ENCODE measurements at regions of chr4 and their contacts with region 1.

Region 1: DNA sequence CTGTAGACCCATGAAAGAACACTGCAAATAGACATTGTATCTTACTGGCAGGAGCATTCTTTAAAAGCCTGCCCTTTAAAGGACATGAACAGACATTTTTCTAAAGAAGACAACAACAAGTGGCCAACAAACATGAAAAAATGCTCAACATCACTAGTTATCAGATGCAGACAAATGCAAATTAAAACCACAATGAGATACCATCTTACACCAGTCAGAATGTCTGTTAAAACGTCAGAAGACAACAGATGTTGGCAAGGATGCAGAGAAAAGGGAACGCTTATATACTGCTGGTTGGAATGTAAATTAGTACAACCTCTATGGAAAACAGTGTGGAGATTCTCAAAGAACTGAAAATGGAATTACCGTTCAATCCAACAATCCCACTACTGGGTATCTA is 77.2 kb downstream of the ATP10D start:
- DNase-seq: no peak
- H3K4me3 Mint-ChIP-seq: no peak overlapping the region
- H3K27ac Mint-ChIP-seq: no peak overlapping the region
- H3K4me1 Mint-ChIP-seq: no peaks in the 10 kb centered on the region
- H3K27me3 Mint-ChIP-seq: no peaks in the 10 kb centered on the region

Region 2: DNA sequence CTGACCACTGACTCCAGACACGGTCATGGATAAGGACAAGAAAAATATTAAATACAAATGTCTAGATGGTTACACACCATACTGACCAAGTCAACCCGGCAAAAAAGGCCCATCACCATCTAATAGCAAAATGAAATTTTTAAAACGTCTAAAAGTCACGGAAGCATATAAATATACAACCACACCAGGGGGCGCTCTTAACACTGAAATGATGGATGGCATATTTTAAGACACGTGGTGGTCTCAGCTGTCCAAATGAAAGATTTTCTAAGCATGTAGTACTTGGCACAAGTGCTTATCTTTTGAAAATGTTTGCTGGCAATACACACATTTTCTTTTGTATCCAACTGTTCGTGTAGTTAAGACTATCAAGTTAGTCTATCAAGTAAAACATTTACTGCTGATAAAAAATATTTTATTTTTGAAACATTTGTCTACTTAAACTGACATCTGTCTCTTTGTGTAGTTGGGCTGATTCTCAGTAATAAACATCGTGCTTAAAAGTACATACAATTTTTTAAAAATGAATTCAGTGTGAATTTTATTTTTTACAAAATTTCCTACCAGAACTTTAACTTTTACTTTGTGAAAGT is 717.9 kb before region 1 on chr4:
- CTCF ChIA-PET with region 1: no interaction called
- intact Hi-C with region 1: loop called (anchors 2 kb)
- DNase-seq: peak; percentile 66
- H3K4me3 Mint-ChIP-seq: no peak overlapping the region
- H3K27ac Mint-ChIP-seq: no peak overlapping the region
- H3K4me1 Mint-ChIP-seq: no peaks in the 10 kb centered on the region
- H3K27me3 Mint-ChIP-seq: no peaks in the 10 kb centered on the region

Region 3: GRCh38 chr4:46931981-46932380 is 630.3 kb before region 1 on chr4:
- CTCF ChIA-PET with region 1: no interaction called
- intact Hi-C with region 1: loop called (anchors 10 kb)
- DNase-seq: peak; percentile 24
- H3K4me3 Mint-ChIP-seq: no peak overlapping the region
- H3K27ac Mint-ChIP-seq: no peak overlapping the region
- H3K4me1 Mint-ChIP-seq: no peaks in the 10 kb centered on the region
- H3K27me3 Mint-ChIP-seq: peaks cover 9% of the 10 kb centered on the region

Region 4: GRCh38 chr4:47490550-47490949 is 71.7 kb before region 1 on chr4:
- CTCF ChIA-PET with region 1: interaction called, 12 read pairs
- intact Hi-C with region 1: loop called (anchors 1 kb)
- DNase-seq: peak; percentile 40
- H3K4me3 Mint-ChIP-seq: no peak overlapping the region
- H3K27ac Mint-ChIP-seq: no peak overlapping the region
- H3K4me1 Mint-ChIP-seq: peaks cover 24% of the 10 kb centered on the region
- H3K27me3 Mint-ChIP-seq: no peaks in the 10 kb centered on the region

Region 5: DNA sequence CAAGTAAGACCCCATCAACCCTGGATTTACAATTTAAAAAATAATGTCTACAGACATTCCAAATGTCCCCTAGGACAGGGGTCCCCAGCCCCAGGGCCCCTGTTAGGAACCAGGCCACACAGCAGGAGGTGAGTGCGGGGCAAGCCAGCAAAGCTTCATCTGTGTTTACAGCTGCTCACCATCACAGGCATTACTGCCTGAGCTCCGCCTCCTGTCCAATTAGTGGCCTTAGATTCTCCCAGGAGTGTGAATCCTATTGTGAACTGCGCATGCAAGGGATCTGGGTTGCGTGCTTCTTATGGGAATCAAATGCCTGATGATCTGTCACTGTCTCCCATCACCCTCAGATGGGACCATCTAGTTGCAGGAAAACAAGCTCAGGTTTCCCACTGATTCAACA is 68.9 kb after region 1 on chr4:
- CTCF ChIA-PET with region 1: no interaction called
- intact Hi-C with region 1: no loop called
- DNase-seq: no peak
- H3K4me3 Mint-ChIP-seq: no peak overlapping the region
- H3K27ac Mint-ChIP-seq: no peak overlapping the region
- H3K4me1 Mint-ChIP-seq: no peaks in the 10 kb centered on the region
- H3K27me3 Mint-ChIP-seq: peaks cover 1% of the 10 kb centered on the region

Region 6: DNA sequence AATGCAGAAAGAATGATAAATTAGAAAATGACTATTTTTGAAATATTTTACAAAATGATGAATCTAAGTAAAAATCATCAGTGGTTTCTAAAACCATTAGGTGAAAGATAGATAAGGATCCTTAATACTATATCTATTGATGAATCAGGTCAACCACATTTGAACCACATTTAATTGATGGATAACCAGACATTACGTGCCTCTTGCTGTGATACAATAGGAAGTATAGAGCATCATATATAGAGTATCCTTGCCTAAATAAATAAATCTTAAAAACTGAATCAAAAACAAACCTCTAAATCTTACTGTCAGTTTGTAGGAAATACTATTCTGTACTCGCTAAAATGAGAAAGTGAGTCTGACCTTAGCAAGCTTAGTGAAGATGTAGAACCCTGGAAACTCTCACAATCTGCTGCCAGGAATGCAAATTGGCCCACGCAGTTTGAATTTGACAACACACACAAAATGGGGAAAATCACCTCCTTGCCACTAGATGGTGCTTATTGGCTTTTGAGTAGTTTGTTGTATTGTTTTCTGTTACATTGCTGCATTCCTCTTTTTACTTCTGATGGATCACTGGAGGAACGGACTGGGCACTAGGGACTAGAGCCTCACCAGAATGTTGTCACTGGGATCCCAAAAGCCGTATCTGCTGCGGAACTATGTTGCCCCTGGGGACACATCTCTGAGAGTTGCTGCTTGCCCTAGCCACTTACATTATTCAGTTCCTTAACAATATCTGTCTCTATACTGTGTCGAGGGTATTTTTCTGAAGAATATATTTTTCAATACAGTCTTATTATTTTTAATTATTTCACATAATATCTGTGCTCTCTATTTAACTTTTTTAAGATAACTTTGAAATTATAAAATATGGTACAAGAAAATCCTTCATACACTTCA is 753.7 kb after region 1 on chr4:
- CTCF ChIA-PET with region 1: no interaction called
- intact Hi-C with region 1: no loop called
- DNase-seq: peak; percentile 52
- H3K4me3 Mint-ChIP-seq: no peak overlapping the region
- H3K27ac Mint-ChIP-seq: no peak overlapping the region
- H3K4me1 Mint-ChIP-seq: peaks cover 3% of the 10 kb centered on the region
- H3K27me3 Mint-ChIP-seq: no peaks in the 10 kb centered on the region

Region 7: DNA sequence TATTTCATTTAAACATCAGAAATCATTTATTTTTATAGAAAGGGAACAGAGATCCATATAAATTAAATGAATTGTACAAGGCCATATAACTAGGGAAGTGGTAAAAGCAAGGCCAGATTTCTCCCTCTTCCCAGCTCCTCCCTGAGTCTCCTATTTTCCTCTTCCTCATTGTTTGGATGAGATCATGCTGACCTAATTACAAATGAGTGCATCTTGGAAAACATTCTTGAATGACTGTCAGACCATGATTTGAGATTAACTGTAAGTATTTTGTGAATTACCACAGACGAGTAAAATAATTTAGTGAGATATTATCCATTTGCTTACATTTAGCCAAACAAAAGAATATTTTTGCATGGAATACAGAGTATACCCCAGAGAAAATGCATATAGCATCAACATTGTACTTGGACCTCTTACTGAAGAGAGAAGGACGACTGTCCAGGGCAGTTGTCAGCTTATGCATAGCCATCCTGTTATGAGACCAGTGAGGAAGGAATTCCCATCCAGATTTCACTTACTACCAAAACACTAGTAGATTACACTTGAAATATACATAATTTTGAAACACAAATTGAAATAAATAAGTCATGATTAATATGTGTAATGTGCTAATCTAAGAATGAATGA is 826.3 kb after region 1 on chr4:
- CTCF ChIA-PET with region 1: no interaction called
- intact Hi-C with region 1: no loop called
- DNase-seq: no peak
- H3K4me3 Mint-ChIP-seq: no peak overlapping the region
- H3K27ac Mint-ChIP-seq: no peak overlapping the region
- H3K4me1 Mint-ChIP-seq: no peaks in the 10 kb centered on the region
- H3K27me3 Mint-ChIP-seq: no peaks in the 10 kb centered on the region

Measured in activated naive CD4-positive, alpha-beta T cell treated with anti-CD3 and anti-CD28 coated beads for 36 hours (primary cell).